HEK293 (cell line): ENCODE measurements at regions of chr19 and their contacts with region 1.

Region 1: DNA sequence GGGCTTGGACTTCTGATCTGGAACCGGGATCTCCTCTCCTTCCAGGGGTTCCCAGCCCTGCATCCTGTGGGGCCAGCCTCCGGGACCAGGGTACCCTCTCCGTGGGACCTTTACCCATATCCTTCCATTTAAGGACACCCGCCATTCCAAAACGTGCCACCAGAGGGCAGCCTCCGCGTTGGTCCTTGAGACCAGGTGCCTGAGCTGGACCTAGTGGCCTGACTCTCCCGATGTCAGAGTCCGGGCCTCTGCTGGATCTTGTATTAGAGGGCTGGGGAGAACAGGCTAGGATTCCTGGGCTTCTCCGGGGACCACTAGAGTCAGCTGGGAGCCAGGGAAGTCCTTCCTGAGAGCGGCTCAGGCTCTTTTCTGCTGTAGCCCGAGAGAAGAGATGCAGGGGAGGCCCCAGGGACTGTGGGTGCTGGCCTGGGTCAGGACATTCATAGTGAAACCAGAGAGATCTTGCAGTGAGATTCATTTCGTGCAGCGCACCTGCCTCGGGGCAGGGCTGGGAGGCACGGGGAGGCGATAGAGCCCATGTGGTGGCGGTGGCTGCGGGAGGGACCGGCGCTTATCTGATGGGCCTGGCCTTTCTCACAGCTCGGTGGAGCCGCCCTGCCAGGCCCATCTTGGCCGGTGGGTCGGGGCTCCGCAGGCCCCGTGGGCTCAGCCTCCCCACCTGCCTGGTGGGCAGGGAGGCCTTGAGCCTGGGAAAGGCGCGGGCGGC is 9.8 kb upstream of the SLC7A10 start:
- H3K4me3 ChIP-seq: no peak overlapping the region
- H3K27ac ChIP-seq: no peak overlapping the region
- H3K4me1 ChIP-seq: peaks cover 2% of the 10 kb centered on the region; the same call in 1 of the 2 replicates
- CTCF ChIP-seq: peak; percentile 88

Region 2: DNA sequence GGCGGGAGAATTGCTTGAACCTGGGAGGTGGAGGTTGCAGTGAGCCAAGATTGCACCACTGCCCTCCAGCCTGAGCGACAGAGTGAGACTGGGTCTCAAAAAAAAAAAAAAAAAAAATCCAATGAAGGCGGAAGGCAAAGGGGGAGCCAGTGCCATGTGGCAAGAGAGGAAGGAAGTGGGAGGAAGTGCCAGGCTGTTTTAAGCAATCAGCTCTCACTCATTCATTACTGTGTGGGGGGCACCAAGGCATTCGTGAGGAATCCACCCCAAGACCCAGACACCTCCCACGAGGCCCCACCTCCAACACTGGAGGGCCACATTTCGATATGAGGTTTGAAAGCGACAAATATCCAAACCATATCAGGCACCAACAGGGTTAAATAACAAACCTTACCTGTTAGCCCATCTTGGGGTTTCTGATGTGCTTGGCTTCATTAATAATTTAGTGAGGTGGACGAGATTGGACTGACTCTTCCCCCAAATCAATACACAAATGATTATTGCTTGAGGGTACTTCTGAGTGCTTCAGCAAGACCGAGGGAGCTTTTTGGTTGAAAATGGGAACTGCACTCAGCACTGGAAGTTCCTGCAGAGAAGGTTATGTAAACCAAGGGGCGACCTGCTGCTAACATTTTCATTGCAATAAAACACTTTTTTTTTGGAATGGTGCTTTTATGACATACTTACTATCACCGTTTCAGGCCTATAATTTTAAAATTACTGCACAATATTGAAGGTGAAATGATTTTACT is 48.8 kb before region 1 on chr19:
- CTCF ChIA-PET with region 1: interaction called, 14 read pairs
- POLR2A ChIA-PET with region 1: no interaction called
- H3K4me3 ChIP-seq: no peak overlapping the region
- H3K27ac ChIP-seq: no peak overlapping the region
- H3K4me1 ChIP-seq: peaks cover 5% of the 10 kb centered on the region; the same call in 1 of the 2 replicates
- CTCF ChIP-seq: no peak

Region 3: GRCh38 chr19:33280351-33280921 is 45.0 kb after region 1 on chr19:
- CTCF ChIA-PET with region 1: interaction called, 10 read pairs
- POLR2A ChIA-PET with region 1: no interaction called
- H3K4me3 ChIP-seq: no peak overlapping the region
- H3K27ac ChIP-seq: peak overlapping the region; percentile 32; the same call in 1 of the 2 replicates
- H3K4me1 ChIP-seq: peaks cover 7% of the 10 kb centered on the region
- CTCF ChIP-seq: 0 out of 2 replicates have a peak, but pooled peaks have one; percentile 13

Region 4: GRCh38 chr19:33379151-33379829 is 143.9 kb after region 1 on chr19:
- CTCF ChIA-PET with region 1: interaction called, 26 read pairs
- POLR2A ChIA-PET with region 1: interaction called, 3 read pairs
- H3K4me3 ChIP-seq: no peak overlapping the region
- H3K27ac ChIP-seq: no peak overlapping the region
- H3K4me1 ChIP-seq: peaks cover 70% of the 10 kb centered on the region
- CTCF ChIP-seq: peak; percentile 60; the same call in 1 of the 2 replicates

Region 5: GRCh38 chr19:33416307-33417215 is 181.1 kb after region 1 on chr19:
- CTCF ChIA-PET with region 1: interaction called, 34 read pairs
- POLR2A ChIA-PET with region 1: no interaction called
- H3K4me3 ChIP-seq: no peak overlapping the region
- H3K27ac ChIP-seq: peak overlapping the region; percentile 49; the same call in 1 of the 2 replicates
- H3K4me1 ChIP-seq: peaks cover 7% of the 10 kb centered on the region
- CTCF ChIP-seq: peak; percentile 98